AG04449 (cell line): ENCODE measurements at regions of chr5 and their contacts with region 1.

Region 1: DNA sequence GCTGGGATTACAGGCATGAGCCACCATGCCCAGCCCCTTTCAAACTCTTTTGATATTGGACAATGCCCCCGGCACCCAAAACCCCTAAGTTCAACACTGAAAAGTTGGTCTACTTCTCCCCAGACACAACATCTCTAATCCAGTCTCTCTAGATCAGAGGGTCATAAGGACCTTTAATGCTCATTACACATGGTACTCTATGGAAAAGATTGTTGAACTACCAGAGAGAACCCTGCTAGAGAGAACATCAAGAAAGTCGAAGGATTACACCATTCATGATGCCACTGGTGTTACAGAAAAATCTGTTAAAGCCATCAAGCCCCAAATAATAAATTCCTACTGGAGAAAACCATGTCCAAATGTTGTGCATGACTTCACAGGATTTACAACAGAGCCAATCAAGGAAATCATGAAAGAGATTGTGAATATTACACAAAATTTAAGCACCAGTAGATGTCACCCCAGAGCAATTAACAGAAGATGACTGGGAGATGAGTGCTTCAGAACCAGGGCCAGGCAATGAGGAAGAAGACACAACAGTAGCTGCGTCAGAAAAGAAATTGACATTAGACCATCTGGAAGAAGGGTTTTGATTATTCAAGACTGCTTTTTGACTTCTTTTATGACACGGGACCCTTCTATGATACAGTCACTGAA is 28.3 kb upstream of the NIPAL4 start:
- DNase-seq: peak; percentile 16
- H3K4me3 ChIP-seq: no peak overlapping the region
- CTCF ChIP-seq: peak; percentile 34

Region 2: DNA sequence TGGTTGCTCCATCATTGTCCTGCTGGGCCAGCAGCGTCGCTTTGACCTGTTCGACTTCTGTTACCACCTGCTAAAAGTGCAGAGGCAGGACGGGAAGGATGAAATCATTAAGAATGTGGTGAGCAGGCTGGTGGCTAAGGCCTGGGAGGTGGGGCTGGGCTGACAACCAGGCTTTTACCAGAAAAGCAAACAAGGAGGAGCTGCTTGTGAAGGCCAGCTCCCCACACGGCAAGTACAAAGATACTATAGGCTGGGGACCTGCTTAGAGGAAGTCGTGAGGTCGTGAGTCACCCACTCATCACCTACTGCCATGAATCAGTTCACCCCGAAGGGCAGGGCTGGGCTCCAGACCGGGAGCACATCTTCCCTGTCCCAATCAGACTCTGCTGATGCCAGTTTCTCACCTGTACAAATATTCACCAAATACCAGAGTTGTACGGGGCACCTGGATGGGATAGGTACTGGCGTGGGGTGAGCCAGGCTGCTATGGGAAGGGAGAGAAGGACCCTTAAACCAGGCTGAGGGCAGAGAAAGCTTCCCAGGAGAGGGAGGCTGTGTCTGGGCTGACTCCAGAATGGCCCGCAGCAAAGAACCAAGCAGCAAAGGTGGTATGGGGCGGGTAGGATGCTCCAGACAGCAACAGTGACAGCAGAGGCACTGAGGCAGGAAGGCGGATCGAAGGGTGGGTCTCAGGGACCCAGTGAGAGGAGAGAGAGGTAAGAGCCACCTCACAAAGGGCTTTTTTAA is 40.9 kb before region 1 on chr5:
- CTCF ChIA-PET with region 1: interaction called, 17 read pairs
- POLR2A ChIA-PET with region 1: no interaction called
- DNase-seq: peak; percentile 82
- H3K4me3 ChIP-seq: no peak overlapping the region
- CTCF ChIP-seq: no peak

Region 3: DNA sequence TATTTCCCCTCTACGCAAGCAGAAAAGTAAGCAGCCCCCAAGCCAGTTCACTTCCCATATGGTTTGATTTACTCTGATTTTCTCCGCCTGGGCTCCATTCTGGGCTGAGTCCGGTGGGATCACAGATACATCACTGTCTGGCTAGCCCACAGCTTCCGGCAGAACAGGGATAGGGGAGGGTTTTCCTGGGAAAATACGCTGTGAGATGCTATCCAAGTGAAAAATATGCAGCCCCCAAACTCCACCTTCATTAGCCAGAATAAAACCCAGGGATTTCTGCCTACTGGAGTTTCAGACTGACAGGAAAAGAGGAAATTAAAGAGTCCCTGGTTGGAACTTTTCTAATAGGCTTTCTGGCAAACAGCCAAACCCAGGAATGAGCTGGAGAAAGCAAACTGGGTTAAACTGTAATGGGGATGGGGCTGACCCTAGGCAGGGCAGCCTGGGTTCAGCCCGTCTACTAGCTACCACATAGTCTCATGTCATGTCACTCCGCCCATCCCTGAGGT is 11.4 kb after region 1 on chr5:
- CTCF ChIA-PET with region 1: interaction called, 39 read pairs
- POLR2A ChIA-PET with region 1: no interaction called
- DNase-seq: no peak
- H3K4me3 ChIP-seq: no peak overlapping the region
- CTCF ChIP-seq: no peak

Region 4: GRCh38 chr5:157449011-157449723 is 17.5 kb after region 1 on chr5:
- CTCF ChIA-PET with region 1: interaction called, 39 read pairs
- POLR2A ChIA-PET with region 1: no interaction called
- DNase-seq: no peak
- H3K4me3 ChIP-seq: no peak overlapping the region
- CTCF ChIP-seq: no peak

Region 5: DNA sequence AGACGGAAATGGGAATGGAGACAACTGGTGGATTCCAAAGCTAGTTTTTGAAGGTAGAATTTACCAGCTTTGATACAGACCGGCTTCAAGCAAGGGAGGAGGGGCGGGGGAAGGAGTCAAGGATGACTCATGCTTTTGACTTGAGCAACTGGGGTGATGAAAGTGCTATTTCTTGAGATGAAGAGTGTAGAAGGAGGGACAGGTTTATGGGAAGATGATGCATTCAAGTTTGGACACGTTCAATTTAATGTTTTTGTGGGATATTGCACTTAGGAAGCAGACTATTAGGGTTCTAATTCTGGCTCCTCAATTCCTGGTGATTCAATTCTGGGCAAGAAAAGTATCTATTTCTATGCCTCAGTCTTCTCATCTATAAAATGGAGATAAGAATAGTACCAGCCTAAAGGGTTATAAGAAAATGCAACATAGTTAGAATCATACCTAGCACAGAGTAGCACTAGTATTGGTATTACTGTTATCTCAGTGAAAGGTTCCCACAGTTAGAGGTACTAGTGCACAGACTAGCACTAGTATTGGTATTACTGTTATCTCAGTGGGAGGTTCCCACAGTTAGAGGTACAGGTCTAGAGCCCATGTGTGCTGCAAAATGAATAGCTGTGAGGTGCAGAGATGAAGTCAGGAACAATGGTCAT is 33.0 kb after region 1 on chr5:
- CTCF ChIA-PET with region 1: interaction called, 106 read pairs
- POLR2A ChIA-PET with region 1: interaction called, 3 read pairs
- DNase-seq: peak; percentile 76
- H3K4me3 ChIP-seq: no peak overlapping the region
- CTCF ChIP-seq: no peak

Region 6: GRCh38 chr5:157487358-157487757 is 55.7 kb after region 1 on chr5:
- CTCF ChIA-PET with region 1: no interaction called
- POLR2A ChIA-PET with region 1: no interaction called
- DNase-seq: no peak
- H3K4me3 ChIP-seq: no peak overlapping the region
- CTCF ChIP-seq: no peak